A673 (cell line): ENCODE measurements at regions of chr1 and their contacts with region 1.

Region 1: GRCh38 chr1:199684686-199685273 is 342.7 kb upstream of the NR5A2 start:
- DNase-seq: peak; percentile 84
- H3K4me3 ChIP-seq: no peak overlapping the region
- H3K27ac ChIP-seq: no peak overlapping the region
- H3K4me1 ChIP-seq: peaks cover 89% of the 10 kb centered on the region
- H3K27me3 ChIP-seq: no peaks in the 10 kb centered on the region
- CTCF ChIP-seq: peak; percentile 90

Region 2: DNA sequence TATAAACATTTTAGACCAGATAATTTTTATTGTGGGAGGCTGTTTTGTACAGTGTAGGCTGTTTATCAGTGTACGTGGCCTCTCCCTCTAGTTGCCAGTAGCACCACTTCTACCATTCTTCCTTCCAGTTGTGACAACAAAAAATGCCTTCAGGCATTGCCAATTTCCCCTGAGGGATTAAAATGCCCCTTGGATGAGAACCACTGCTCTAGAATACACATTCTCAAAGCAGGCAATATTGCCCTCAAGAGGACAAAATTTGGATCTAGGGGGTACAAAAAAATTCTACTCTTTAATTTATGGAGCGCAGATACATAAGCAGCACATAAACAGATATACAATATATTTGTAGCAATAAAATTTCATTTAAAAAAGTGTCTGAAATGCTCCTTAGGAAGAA is 371.3 kb before region 1 on chr1:
- CTCF ChIA-PET with region 1: no interaction called
- POLR2A ChIA-PET with region 1: no interaction called
- intact Hi-C with region 1: loop called (anchors 2 kb)
- DNase-seq: peak; percentile 95
- H3K4me3 ChIP-seq: no peak overlapping the region
- H3K27ac ChIP-seq: peak overlapping the region; percentile 95
- H3K4me1 ChIP-seq: peaks cover 47% of the 10 kb centered on the region
- H3K27me3 ChIP-seq: no peaks in the 10 kb centered on the region
- CTCF ChIP-seq: peak; percentile 62

Region 3: GRCh38 chr1:199948587-199949280 is 264.0 kb after region 1 on chr1:
- CTCF ChIA-PET with region 1: no interaction called
- POLR2A ChIA-PET with region 1: no interaction called
- intact Hi-C with region 1: loop called (anchors 10 kb)
- DNase-seq: peak; percentile 31
- H3K4me3 ChIP-seq: no peak overlapping the region
- H3K27ac ChIP-seq: no peak overlapping the region
- H3K4me1 ChIP-seq: peaks cover 6% of the 10 kb centered on the region
- H3K27me3 ChIP-seq: peaks cover 19% of the 10 kb centered on the region
- CTCF ChIP-seq: no peak

Region 4: DNA sequence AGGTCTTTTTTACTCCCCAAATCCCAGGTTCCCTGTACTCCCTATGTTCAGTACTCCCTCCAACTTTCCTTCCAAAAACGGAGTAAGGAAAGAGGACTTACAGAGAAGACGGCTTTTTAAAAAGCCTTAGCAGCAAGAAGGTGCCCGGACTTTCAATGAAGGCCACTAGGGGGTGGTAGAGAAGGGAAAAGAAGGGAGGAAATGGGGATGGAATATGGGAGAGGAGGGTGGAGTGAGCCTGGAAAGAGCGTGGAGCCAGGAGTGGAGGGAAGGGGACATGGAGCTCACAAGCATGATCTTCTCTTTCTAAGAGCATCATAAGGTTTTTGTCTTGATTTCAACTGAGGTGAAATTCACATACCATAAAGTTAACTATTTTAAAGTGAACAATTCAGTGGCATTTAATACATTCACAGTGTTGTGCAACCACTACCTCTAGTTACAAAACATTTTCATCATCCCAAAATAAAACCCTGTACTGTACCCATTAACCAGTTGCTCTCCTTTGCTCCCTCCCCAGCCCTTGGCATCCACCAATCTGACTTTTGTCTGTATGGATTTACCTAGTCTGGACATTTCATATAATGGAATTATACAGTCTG is 595.1 kb after region 1 on chr1:
- CTCF ChIA-PET with region 1: no interaction called
- POLR2A ChIA-PET with region 1: no interaction called
- intact Hi-C with region 1: loop called (anchors 5 kb)
- DNase-seq: peak; percentile 77
- H3K4me3 ChIP-seq: no peak overlapping the region
- H3K27ac ChIP-seq: no peak overlapping the region
- H3K4me1 ChIP-seq: no peaks in the 10 kb centered on the region
- H3K27me3 ChIP-seq: no peaks in the 10 kb centered on the region
- CTCF ChIP-seq: peak; percentile 80

Region 5: DNA sequence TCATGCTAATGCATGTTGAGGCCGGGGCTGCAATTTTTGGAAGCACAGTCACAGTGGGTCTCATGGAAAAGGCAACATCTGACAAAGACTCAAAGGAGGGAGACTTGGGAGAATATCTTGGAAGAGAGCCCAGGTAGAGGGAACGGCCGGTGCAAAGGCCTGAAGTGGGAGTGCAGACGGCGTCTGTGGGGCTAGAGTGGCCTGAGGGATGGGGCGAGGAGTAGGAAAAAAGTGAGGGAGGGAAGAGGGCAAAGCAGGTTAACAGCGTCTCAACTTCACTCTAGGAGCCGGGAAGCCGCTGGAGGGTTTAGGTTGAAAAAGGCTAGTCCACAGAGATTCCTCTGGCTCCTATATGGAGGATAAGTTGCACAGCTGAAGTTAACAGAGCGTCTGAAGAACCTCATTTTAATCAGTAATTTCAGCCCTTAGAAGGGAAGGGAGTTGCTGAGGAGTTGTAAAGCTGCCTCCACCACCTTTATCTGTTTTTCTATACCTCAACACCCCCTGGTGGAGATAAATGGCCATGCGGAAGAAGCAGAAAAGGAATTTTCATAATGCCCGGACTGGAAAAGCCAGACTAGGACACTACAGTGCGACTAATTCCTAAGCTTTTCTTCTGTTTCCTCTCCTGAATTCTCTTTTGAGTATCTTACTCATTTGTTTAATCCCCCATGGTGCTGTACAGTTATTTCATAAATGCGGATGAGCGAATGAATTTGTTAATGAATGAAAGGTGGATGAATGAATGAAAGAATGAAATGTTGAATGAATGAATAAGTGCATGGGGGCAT is 803.8 kb after region 1 on chr1:
- CTCF ChIA-PET with region 1: interaction called, 6 read pairs
- POLR2A ChIA-PET with region 1: no interaction called
- intact Hi-C with region 1: loop called (anchors 1 kb)
- DNase-seq: peak; percentile 82
- H3K4me3 ChIP-seq: no peak overlapping the region
- H3K27ac ChIP-seq: no peak overlapping the region
- H3K4me1 ChIP-seq: no peaks in the 10 kb centered on the region
- H3K27me3 ChIP-seq: no peaks in the 10 kb centered on the region
- CTCF ChIP-seq: peak; percentile 87

Region 6: GRCh38 chr1:201268604-201269151 is 1583.9 kb after region 1 on chr1:
- CTCF ChIA-PET with region 1: no interaction called
- POLR2A ChIA-PET with region 1: no interaction called
- intact Hi-C with region 1: loop called (anchors 5 kb)
- DNase-seq: peak; percentile 74
- H3K4me3 ChIP-seq: no peak overlapping the region
- H3K27ac ChIP-seq: peak overlapping the region; percentile 99
- H3K4me1 ChIP-seq: peaks cover 83% of the 10 kb centered on the region
- H3K27me3 ChIP-seq: no peaks in the 10 kb centered on the region
- CTCF ChIP-seq: no peak